Activated T-helper 2 cell treated with anti-CD3 and anti-CD28 coated beads, Interferon-gamma antibody, Interleukin-2, Interleukin-4, amounts not matched to agents 10 μg/mL and 5 μg/mL and 100 μg/mL, durations not matched to agents 14 hours and 24 hours and 36 hours (primary cell): ENCODE measurements at regions of chr1 and their contacts with region 1.

Region 1: GRCh38 chr1:93692983-93693591 is 11.4 kb upstream of the BCAR3 start:
- DNase-seq: peak; percentile 52
- H3K4me3 Mint-ChIP-seq: peak overlapping the region; percentile 18
- H3K27ac Mint-ChIP-seq: peak overlapping the region; percentile 83
- H3K4me1 Mint-ChIP-seq: no peaks in the 10 kb centered on the region
- H3K27me3 Mint-ChIP-seq: peaks cover 5% of the 10 kb centered on the region

Region 2: GRCh38 chr1:93615582-93616150 is 77.4 kb before region 1 on chr1:
- intact Hi-C with region 1: loop called (anchors 2 kb)
- DNase-seq: no peak
- H3K4me3 Mint-ChIP-seq: no peak overlapping the region
- H3K27ac Mint-ChIP-seq: peak overlapping the region; percentile 68
- H3K4me1 Mint-ChIP-seq: peaks cover 22% of the 10 kb centered on the region
- H3K27me3 Mint-ChIP-seq: peaks cover 29% of the 10 kb centered on the region

Region 3: GRCh38 chr1:93635614-93636543 is 57.2 kb before region 1 on chr1:
- intact Hi-C with region 1: no loop called
- DNase-seq: no peak
- H3K4me3 Mint-ChIP-seq: no peak overlapping the region
- H3K27ac Mint-ChIP-seq: no peak overlapping the region
- H3K4me1 Mint-ChIP-seq: no peaks in the 10 kb centered on the region
- H3K27me3 Mint-ChIP-seq: no peaks in the 10 kb centered on the region

Region 4: DNA sequence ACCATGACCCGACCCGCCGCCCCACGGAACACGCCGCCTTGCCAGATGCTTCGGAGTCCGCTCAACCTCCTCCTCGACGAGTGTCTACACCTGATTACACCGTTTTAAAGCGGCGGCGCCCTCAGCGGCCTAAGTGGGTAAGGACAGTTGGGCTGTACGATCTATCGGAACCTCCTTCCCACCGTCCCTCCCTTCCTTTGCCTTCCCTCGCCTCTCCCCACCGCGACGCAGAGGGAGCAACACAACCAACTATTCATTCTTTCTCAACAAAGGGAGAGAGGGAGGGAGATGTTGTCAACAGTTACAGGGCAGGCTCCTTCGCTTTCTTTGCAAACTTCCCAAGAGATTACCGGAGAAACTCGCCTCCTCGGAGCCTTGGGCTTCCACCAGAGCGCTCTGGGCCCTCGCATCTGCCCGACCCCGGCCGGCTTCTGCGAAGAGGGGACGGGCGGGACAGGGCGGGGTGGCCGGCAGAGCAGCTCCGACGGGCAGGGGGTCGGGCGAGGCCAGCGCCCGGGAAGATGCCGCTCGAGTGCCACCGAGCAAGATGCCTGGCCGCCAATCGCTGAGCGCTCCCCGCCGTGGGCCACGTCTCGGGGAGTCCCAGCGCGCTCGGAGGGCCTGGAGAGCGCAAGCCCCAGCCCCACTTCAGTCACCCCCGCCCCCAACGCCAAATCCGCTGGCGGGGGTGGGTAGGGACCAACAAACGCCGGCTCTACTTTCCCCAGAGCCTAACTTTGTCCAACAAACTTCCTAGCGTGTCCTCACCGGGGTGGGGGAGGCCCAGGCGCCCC is 12.1 kb before region 1 on chr1:
- intact Hi-C with region 1: loop called (anchors 1 kb)
- DNase-seq: peak; percentile 46
- H3K4me3 Mint-ChIP-seq: peak overlapping the region; percentile 94
- H3K27ac Mint-ChIP-seq: peak overlapping the region; percentile 84
- H3K4me1 Mint-ChIP-seq: peaks cover 38% of the 10 kb centered on the region
- H3K27me3 Mint-ChIP-seq: peaks cover 31% of the 10 kb centered on the region

Region 5: GRCh38 chr1:93708734-93709481 is 15.8 kb after region 1 on chr1:
- intact Hi-C with region 1: loop called (anchors 1 kb)
- DNase-seq: no peak
- H3K4me3 Mint-ChIP-seq: peak overlapping the region; percentile 47
- H3K27ac Mint-ChIP-seq: peak overlapping the region; percentile 74
- H3K4me1 Mint-ChIP-seq: peaks cover 77% of the 10 kb centered on the region
- H3K27me3 Mint-ChIP-seq: no peaks in the 10 kb centered on the region

Region 6: DNA sequence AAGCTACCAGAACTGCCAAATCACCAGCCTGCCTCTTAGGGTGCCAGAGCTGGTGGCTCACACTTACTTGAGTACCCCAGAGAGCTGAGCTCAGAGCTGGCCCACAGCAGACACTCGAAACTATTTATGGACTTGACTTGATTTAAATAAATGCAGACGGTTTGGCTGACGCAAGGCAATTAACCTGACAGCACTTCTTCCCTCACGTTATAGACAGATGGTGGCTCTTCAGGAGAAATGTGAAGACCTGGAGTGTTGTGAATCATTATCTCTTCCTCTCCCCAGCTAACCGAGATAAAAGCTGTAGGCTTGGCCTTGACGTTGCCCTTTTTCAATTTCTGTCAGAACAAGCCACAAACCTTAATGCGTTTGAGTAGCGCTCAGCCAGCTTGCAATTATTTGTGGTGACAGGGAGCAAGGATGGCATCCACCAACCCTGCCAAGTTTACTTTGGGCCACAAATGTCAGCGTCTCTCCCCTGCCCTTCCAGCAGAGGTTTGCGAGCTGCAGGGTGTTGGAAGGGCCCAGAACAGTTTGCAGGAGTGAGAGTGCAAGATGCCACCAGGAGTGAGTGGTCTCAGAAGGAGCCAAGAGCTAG is 22.5 kb after region 1 on chr1:
- intact Hi-C with region 1: loop called (anchors 1 kb)
- DNase-seq: peak; percentile 48
- H3K4me3 Mint-ChIP-seq: peak overlapping the region; percentile 47
- H3K27ac Mint-ChIP-seq: peak overlapping the region; percentile 78
- H3K4me1 Mint-ChIP-seq: peaks cover 61% of the 10 kb centered on the region
- H3K27me3 Mint-ChIP-seq: no peaks in the 10 kb centered on the region

Region 7: GRCh38 chr1:93758842-93759515 is 65.9 kb after region 1 on chr1:
- intact Hi-C with region 1: loop called (anchors 5 kb)
- DNase-seq: peak; percentile 34
- H3K4me3 Mint-ChIP-seq: no peak overlapping the region
- H3K27ac Mint-ChIP-seq: peak overlapping the region; percentile 73
- H3K4me1 Mint-ChIP-seq: peaks cover 51% of the 10 kb centered on the region
- H3K27me3 Mint-ChIP-seq: no peaks in the 10 kb centered on the region

Region 8: DNA sequence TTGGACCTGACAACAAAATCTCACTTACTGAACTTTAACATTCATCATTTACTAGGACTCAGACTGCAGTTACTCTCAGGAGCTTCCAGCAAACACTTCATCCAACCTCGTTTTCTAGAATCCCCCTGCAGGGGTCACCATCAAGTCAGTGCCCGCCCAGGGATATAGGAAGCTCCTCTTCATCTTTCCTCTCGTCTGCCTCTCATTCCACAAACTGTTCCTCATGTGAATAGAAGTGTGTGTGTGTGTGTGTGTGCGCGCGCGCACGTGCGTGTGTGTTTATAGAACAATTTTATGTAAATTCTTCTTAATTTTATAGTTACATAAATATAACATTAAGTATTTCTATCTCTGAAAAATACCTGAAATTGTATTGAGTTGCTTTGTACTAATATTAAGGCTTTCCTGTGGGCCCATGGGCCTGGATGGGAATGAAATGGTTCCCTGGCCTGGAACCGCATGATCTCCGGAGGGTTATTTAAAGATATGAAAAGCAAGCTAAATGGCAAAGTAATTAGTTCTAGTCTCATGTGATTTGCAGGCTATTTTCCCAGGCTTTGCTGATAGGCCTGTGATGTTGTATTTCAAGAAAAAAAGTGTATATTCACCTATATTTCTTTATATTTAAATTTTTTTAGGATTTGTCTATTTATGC is 703.4 kb after region 1 on chr1:
- intact Hi-C with region 1: no loop called
- DNase-seq: no peak
- H3K4me3 Mint-ChIP-seq: no peak overlapping the region
- H3K27ac Mint-ChIP-seq: no peak overlapping the region
- H3K4me1 Mint-ChIP-seq: no peaks in the 10 kb centered on the region
- H3K27me3 Mint-ChIP-seq: peaks cover 3% of the 10 kb centered on the region